ENCODE measurements at regions of chr20 and their contacts with region 1.

Region 1: DNA sequence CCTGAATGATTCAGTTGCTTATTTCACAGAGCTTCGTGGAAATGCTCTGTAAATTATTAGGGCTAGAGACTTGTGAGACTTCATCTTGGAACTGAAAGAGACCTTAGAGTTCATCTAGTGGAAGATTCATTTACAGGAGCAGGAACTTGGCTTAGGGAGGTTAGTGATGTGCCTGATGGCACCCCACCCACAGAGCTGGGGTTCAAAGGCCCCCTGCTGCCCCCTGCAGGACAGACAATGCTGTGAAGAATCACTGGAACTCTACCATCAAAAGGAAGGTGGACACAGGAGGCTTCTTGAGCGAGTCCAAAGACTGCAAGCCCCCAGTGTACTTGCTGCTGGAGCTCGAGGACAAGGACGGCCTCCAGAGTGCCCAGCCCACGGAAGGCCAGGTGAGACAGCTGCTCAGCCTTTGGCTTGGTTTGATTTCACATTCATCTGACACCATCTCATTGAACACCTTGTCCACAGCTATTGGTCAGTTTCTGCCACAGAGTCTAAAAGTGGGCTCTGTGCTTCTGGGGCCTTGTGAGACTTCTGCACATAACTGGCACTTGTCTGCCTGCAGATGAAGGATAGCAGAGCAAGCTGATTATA is 25.1 kb downstream of the MYBL2 start:
- DNase-seq: peak; percentile 87
- H3K4me3 ChIP-seq: no peak overlapping the region
- H3K27ac ChIP-seq: no peak overlapping the region
- H3K4me1 ChIP-seq: peaks cover 0 to 5% (median 0%) of the 10 kb centered on the region in 6 donors
- H3K27me3 ChIP-seq: no peaks in the 10 kb centered on the region
- CTCF ChIP-seq: peak in 10 of 11 experiments; percentile 11 to 74 (median 58)
- POLR2A ChIP-seq: no peak

Region 2: GRCh38 chr20:43448748-43449535 is 243.1 kb before region 1 on chr20:
- intact Hi-C with region 1: loop called (anchors 5 kb)
- DNase-seq: no peak
- H3K4me3 ChIP-seq: no peak overlapping the region
- H3K27ac ChIP-seq: no peak overlapping the region
- H3K4me1 ChIP-seq: peaks cover 0 to 6% (median 3%) of the 10 kb centered on the region in 6 donors
- H3K27me3 ChIP-seq: peaks cover 0 to 47% (median 6%) of the 10 kb centered on the region in 7 donors
- CTCF ChIP-seq: peak in 10 of 11 experiments; percentile 25 to 74 (median 66)
- POLR2A ChIP-seq: no peak

Region 3: GRCh38 chr20:43537921-43538877 is 153.8 kb before region 1 on chr20:
- intact Hi-C with region 1: loop called (anchors 5 kb)
- DNase-seq: no peak
- H3K4me3 ChIP-seq: no peak overlapping the region
- H3K27ac ChIP-seq: peak overlapping the region in 1 of 8 donors; percentile 17
- H3K4me1 ChIP-seq: peaks cover 0 to 13% (median 0%) of the 10 kb centered on the region in 6 donors
- H3K27me3 ChIP-seq: no peaks in the 10 kb centered on the region
- CTCF ChIP-seq: peak; percentile 64 to 91 (median 86)
- POLR2A ChIP-seq: no peak